Lower leg skin (tissue), 4 donors: ENCODE measurements at regions of chr15 and their contacts with region 1.

Region 1: DNA sequence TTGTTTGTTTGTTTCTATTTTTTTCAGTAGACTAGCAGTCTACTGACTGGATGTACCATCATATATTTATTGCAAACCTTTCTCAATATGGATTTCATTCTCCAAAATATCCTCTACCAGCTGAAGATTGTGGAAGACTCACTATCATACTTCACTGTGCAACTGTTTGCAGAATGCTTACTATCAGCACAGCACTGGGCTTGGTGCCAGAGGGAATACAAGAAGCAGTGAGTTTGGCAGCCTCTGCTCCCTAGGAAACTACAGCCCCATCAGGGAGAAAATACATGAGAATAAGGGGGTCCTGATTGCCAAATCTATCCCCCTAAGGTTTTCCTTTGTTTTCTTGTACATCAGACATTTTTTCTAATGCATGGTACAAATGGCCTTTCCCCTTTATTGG is 27.5 kb downstream of the AQP9 start:
- DNase-seq: no peak
- H3K4me3 ChIP-seq: no peak overlapping the region
- CTCF ChIP-seq: no peak
- POLR2A ChIP-seq: no peak

Region 2: DNA sequence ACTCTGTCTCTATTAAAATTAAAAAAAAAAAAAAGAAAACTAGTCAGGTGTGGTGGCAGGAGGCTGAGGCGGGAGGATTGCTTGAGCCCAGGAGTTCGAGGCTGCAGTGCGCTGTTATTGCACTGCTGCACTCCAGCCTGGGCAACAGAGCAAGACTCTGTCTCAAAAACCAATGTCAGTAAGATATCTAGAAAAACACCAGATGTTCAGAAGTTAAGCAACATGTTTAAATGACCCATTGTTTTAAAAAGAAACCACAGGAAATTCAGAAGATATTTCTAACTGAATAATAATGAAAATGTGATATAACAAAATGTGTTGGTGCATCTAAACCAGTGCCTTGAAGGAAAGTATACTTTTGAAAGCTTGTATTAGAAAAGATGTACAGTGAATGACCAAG is 992.7 kb before region 1 on chr15:
- intact Hi-C with region 1: no loop called
- DNase-seq: no peak
- H3K4me3 ChIP-seq: no peak overlapping the region
- CTCF ChIP-seq: no peak
- POLR2A ChIP-seq: no peak

Region 3: GRCh38 chr15:58189148-58189811 is 23.6 kb after region 1 on chr15:
- intact Hi-C with region 1: loop called (anchors 2 kb)
- DNase-seq: no peak
- H3K4me3 ChIP-seq: no peak overlapping the region
- CTCF ChIP-seq: no peak
- POLR2A ChIP-seq: no peak